ENCODE measurements at regions of chr2 and their contacts with region 1.

Region 1: GRCh38 chr2:204177977-204178540 is 241.5 kb downstream of the ICOS start:
- DNase-seq: no peak
- H3K4me3 ChIP-seq: no peak overlapping the region
- H3K27ac ChIP-seq: no peak overlapping the region
- H3K27me3 ChIP-seq: no peaks in the 10 kb centered on the region
- CTCF ChIP-seq: peak; percentile 40

Region 2: DNA sequence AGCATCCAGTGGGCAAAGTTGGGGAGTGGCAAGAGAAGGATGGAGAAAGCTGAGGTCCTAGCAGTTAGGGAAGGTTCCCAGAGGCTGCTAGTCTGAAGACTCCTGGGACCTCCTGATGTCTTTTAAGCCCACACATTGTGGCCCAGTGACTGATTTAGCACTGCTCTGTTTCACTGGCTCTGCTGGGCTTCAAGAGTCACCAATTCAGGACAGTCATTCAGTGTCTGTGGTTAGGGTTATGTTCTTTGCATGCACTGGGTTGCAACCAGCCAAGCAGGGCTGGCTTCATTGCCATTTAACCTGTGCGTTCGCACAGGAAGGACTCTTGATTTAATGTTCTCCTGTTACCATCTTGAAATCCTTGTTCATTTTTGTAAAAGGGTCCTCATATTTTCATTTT is 42.3 kb before region 1 on chr2:
- CTCF ChIA-PET with region 1: interaction called, 11 read pairs
- POLR2A ChIA-PET with region 1: no interaction called
- DNase-seq: no peak
- H3K4me3 ChIP-seq: no peak overlapping the region
- H3K27ac ChIP-seq: no peak overlapping the region
- H3K27me3 ChIP-seq: no peaks in the 10 kb centered on the region
- CTCF ChIP-seq: no peak

Region 3: GRCh38 chr2:204166961-204167360 is 11.1 kb before region 1 on chr2:
- CTCF ChIA-PET with region 1: interaction called, 13 read pairs
- POLR2A ChIA-PET with region 1: no interaction called
- DNase-seq: no peak
- H3K4me3 ChIP-seq: no peak overlapping the region
- H3K27ac ChIP-seq: no peak overlapping the region
- H3K27me3 ChIP-seq: no peaks in the 10 kb centered on the region
- CTCF ChIP-seq: no peak

Measured in AG04450 (cell line).